Endothelial cell of umbilical vein (primary cell): ENCODE measurements at regions of chr17 and their contacts with region 1.

Region 1: GRCh38 chr17:50547035-50547735 is at the start of gene SPATA20:
- DNase-seq: peak; percentile 84
- H3K4me3 ChIP-seq: peak within 1 kb of the TSS; percentile 27 to 58 (median 46)
- H3K27ac ChIP-seq: peak within 1 kb of the TSS; percentile 47
- H3K4me1 ChIP-seq: peaks cover 12% of the 10 kb centered on the region
- H3K27me3 ChIP-seq: no peaks in the 10 kb centered on the region
- CTCF ChIP-seq: peak; percentile 95 to 99
- POLR2A ChIP-seq: peak; percentile 92
- total RNA-seq, gene SPATA20: 31.4 and 42.3 TPM in 2 replicates

Region 2: GRCh38 chr17:49809056-49809455 is 738.1 kb before region 1 on chr17:
- CTCF ChIA-PET with region 1: no interaction called
- POLR2A ChIA-PET with region 1: no interaction called
- dilution Hi-C with region 1: no loop called
- intact Hi-C with region 1: no loop called
- DNase-seq: no peak
- H3K4me3 ChIP-seq: no peak overlapping the region
- H3K27ac ChIP-seq: no peak overlapping the region
- H3K4me1 ChIP-seq: peaks cover 8% of the 10 kb centered on the region
- H3K27me3 ChIP-seq: no peaks in the 10 kb centered on the region
- CTCF ChIP-seq: no peak
- POLR2A ChIP-seq: no peak

Region 3: DNA sequence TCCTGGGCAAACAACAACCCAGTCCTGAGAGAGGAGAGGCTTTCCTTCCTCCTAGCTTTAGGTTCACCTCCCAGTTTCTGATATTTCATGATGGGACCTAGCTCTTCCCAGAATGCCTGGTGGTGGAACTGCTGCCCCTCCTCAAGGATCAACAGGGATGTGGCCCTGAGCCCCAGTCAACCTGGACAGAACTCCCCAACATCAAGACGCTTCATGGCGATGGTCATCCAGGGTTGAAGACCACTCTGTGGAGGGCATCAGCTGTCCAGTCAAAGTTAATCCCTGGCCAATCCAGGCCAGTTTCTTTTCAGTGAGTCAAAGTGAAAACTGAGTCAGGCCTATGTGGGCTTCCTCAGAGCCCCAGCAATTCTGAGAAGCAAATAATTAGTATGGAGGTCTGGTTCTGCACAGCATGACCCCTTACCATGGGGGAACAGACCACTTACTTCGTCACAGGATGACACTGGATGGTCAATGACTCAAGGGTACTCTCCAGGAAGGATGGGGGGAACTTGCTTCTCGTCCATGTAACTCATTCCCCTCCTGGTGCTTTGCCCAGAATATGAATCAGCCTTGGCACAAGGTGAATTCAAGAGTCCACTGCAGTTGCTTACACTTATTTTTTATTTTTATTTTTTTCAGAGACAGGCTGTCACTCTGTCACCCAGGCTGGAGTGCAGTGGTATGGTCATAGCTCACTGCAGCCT is 215.9 kb before region 1 on chr17:
- CTCF ChIA-PET with region 1: no interaction called
- POLR2A ChIA-PET with region 1: no interaction called
- dilution Hi-C with region 1: no loop called
- intact Hi-C with region 1: no loop called
- DNase-seq: no peak
- H3K4me3 ChIP-seq: no peak overlapping the region
- H3K27ac ChIP-seq: no peak overlapping the region
- H3K4me1 ChIP-seq: no peaks in the 10 kb centered on the region
- H3K27me3 ChIP-seq: peaks cover 9 to 11% of the 10 kb centered on the region in 2 experiments
- CTCF ChIP-seq: no peak
- POLR2A ChIP-seq: no peak

Region 4: GRCh38 chr17:50361561-50362480 is 185.4 kb before region 1 on chr17:
- CTCF ChIA-PET with region 1: no interaction called
- POLR2A ChIA-PET with region 1: no interaction called
- dilution Hi-C with region 1: no loop called
- intact Hi-C with region 1: no loop called
- DNase-seq: peak; percentile 61
- H3K4me3 ChIP-seq: no peak overlapping the region
- H3K27ac ChIP-seq: no peak overlapping the region
- H3K4me1 ChIP-seq: no peaks in the 10 kb centered on the region
- H3K27me3 ChIP-seq: no peaks in the 10 kb centered on the region
- CTCF ChIP-seq: peak; percentile 77 to 84
- POLR2A ChIP-seq: no peak

Region 5: DNA sequence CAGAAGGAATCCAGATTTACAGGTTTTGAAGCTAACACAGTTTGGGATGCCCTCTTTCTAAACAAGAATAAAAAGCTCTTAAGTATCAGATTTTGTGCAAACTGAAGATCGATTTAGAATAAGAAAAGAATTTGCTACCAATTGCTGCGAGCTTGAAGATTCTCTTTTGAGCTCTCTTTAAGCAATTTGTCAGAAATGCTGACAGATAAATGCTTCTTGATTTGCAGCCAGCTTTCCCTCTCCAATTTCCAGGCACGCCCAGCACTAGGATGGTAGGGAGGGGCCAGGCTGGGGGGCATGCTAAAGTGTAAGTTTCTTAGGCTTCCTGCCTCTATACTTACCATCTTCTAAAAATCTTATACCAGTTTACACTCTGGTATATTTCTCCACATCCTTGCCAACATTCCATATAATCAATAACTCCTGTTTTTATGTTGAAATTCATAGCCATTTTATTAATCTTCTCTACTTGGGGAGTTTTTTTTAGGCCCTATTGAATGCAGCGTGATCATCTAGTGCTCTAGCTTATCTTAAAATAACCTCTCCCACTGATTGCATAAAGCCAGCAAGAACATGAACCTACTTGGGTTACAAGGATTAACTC is 103.7 kb before region 1 on chr17:
- CTCF ChIA-PET with region 1: no interaction called
- POLR2A ChIA-PET with region 1: no interaction called
- dilution Hi-C with region 1: no loop called
- intact Hi-C with region 1: no loop called
- DNase-seq: no peak
- H3K4me3 ChIP-seq: no peak overlapping the region
- H3K27ac ChIP-seq: no peak overlapping the region
- H3K4me1 ChIP-seq: no peaks in the 10 kb centered on the region
- H3K27me3 ChIP-seq: no peaks in the 10 kb centered on the region
- CTCF ChIP-seq: no peak
- POLR2A ChIP-seq: no peak

Region 6: GRCh38 chr17:50560185-50560824 is 13.1 kb after region 1 on chr17 and contains the start of gene CACNA1G:
- CTCF ChIA-PET with region 1: interaction called, 17 read pairs
- POLR2A ChIA-PET with region 1: interaction called, 3 read pairs
- dilution Hi-C with region 1: no loop called
- intact Hi-C with region 1: no loop called
- DNase-seq: peak; percentile 70
- H3K4me3 ChIP-seq: peak within 1 kb of the TSS in 1 of 3 experiments; percentile 15
- H3K27ac ChIP-seq: no peak within 1 kb of the TSS
- H3K4me1 ChIP-seq: peaks cover 7% of the 10 kb centered on the region
- H3K27me3 ChIP-seq: peaks cover 46 to 55% of the 10 kb centered on the region in 2 experiments
- CTCF ChIP-seq: no peak
- POLR2A ChIP-seq: no peak
- total RNA-seq, gene CACNA1G: not detected in 2 replicates

Region 7: DNA sequence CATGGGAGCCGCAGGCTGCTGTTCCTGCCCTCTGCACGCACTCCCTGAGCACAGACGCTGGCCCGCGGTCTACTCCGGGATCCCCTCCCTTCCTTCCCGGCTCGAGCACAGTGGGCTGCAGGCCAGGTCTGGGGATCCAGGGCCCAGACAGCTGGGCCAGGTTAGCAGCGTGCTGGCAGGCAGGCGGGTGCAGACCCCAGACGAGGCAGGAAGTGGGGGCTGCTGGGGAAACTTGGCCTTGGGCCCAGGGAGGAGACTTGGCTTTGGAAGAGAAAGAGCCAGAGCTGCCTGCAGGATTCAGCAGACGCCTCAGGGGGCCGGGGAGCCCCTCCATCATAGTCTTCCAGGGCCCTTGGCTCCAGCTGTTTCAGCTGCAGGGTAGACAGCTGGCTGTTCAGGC is 57.3 kb after region 1 on chr17:
- CTCF ChIA-PET with region 1: interaction called, 12 read pairs
- POLR2A ChIA-PET with region 1: no interaction called
- dilution Hi-C with region 1: no loop called
- intact Hi-C with region 1: no loop called
- DNase-seq: peak; percentile 88
- H3K4me3 ChIP-seq: no peak overlapping the region
- H3K27ac ChIP-seq: no peak overlapping the region
- H3K4me1 ChIP-seq: peaks cover 13% of the 10 kb centered on the region
- H3K27me3 ChIP-seq: peaks cover 2 to 3% of the 10 kb centered on the region in 2 experiments
- CTCF ChIP-seq: no peak
- POLR2A ChIP-seq: no peak

Region 8: DNA sequence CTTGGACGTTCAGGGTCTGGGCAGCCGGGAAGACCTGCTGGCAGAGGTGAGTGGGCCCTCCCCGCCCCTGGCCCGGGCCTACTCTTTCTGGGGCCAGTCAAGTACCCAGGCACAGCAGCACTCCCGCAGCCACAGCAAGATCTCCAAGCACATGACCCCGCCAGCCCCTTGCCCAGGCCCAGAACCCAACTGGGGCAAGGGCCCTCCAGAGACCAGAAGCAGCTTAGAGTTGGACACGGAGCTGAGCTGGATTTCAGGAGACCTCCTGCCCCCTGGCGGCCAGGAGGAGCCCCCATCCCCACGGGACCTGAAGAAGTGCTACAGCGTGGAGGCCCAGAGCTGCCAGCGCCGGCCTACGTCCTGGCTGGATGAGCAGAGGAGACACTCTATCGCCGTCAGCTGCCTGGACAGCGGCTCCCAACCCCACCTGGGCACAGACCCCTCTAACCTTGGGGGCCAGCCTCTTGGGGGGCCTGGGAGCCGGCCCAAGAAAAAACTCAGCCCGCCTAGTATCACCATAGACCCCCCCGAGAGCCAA is 78.9 kb after region 1 on chr17:
- CTCF ChIA-PET with region 1: interaction called, 398 read pairs
- POLR2A ChIA-PET with region 1: interaction called, 6 read pairs
- dilution Hi-C with region 1: no loop called
- intact Hi-C with region 1: loop called (anchors 1 kb)
- DNase-seq: peak; percentile 65
- H3K4me3 ChIP-seq: no peak overlapping the region
- H3K27ac ChIP-seq: no peak overlapping the region
- H3K4me1 ChIP-seq: peaks cover 2% of the 10 kb centered on the region
- H3K27me3 ChIP-seq: peaks cover 0 to 5% of the 10 kb centered on the region in 2 experiments
- CTCF ChIP-seq: peak; percentile 67 to 94
- POLR2A ChIP-seq: no peak

Region 9: DNA sequence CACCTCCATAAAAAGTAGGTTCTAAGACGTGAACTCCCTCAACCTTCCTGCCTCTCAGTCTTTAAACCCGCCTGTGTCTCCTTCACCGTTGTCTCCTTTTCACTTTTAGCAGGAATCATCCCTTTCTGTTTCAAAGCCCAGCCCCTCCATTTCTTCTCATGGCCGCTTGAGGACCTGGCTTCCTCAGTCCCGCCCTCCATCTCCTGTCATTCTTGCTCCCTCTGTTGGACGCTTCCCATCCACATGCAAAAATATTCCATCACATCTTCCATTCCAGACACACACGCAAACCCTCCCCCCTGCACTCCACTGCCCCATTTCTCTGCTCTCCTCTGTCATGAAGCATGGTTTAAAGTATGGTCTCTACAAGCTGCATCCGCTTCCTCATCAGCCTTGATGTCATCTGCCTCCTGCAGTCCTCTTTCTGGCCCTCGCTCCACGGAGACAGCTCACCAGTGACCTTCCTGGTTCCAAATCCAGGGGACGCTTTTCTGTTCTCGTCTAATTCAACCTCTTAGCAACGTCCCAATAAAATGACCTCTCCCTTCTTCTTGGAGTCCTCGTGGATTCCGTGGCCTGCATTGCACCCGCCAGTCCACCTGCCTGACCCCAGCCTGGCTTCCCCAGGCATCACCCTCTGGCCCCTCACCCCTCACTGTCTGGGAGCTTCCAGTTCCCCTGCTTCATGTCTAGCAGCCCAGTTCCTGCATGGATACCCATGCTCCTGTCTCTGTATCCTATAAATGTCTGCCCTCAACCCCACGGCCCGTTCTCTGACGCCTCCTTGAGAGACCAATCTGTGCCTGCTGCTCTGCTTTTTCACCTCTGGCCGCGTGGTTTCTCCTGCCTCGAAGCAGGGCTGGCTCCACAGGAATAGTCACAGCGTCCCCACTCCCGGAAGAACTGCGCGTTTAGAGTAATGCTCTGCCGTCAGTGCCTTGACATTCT is 134.4 kb after region 1 on chr17:
- CTCF ChIA-PET with region 1: interaction called, 21 read pairs
- POLR2A ChIA-PET with region 1: no interaction called
- dilution Hi-C with region 1: no loop called
- intact Hi-C with region 1: loop called (anchors 1 kb)
- DNase-seq: peak; percentile 83
- H3K4me3 ChIP-seq: no peak overlapping the region
- H3K27ac ChIP-seq: no peak overlapping the region
- H3K4me1 ChIP-seq: peaks cover 3% of the 10 kb centered on the region
- H3K27me3 ChIP-seq: no peaks in the 10 kb centered on the region
- CTCF ChIP-seq: peak; percentile 71 to 77
- POLR2A ChIP-seq: no peak

Region 10: DNA sequence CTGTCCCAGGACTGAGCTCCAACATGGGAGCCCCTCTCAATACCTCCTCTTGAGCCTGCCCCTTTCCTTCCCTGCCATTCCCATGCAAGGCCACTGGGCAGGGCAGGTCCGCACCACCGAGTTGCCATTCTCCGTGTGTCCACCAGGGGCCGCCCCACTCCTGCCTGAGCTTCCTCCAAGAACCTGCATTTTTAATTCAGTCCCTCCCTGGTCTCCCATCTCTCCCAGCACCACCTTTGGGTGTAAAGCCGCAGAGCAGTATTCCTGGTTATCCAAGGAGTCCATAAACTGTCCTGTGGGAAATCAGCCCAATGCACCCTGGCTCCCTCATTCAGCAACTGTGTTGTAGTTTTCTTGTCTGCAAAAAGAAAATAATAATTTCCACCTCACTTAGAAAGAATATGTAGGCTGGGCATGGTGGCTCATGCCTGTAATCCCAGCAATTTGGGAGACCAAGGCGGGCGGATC is 236.0 kb after region 1 on chr17:
- CTCF ChIA-PET with region 1: interaction called, 4 read pairs
- POLR2A ChIA-PET with region 1: no interaction called
- dilution Hi-C with region 1: no loop called
- intact Hi-C with region 1: loop called (anchors 1 kb)
- DNase-seq: peak; percentile 87
- H3K4me3 ChIP-seq: no peak overlapping the region
- H3K27ac ChIP-seq: no peak overlapping the region
- H3K4me1 ChIP-seq: peaks cover 5% of the 10 kb centered on the region
- H3K27me3 ChIP-seq: peaks cover 0 to 2% of the 10 kb centered on the region in 2 experiments
- CTCF ChIP-seq: peak; percentile 97 to 99
- POLR2A ChIP-seq: no peak

Region 11: GRCh38 chr17:51153210-51154072 is 606.3 kb after region 1 on chr17 and contains the start of gene NME1:
- CTCF ChIA-PET with region 1: no interaction called
- POLR2A ChIA-PET with region 1: no interaction called
- dilution Hi-C with region 1: no loop called
- intact Hi-C with region 1: loop called (anchors 10 kb)
- DNase-seq: peak; percentile 99
- H3K4me3 ChIP-seq: peak within 1 kb of the TSS; percentile 56 to 87 (median 85)
- H3K27ac ChIP-seq: peak within 1 kb of the TSS; percentile 70
- H3K4me1 ChIP-seq: peaks cover 14% of the 10 kb centered on the region
- H3K27me3 ChIP-seq: no peaks in the 10 kb centered on the region
- CTCF ChIP-seq: peak; percentile 82 to 96
- POLR2A ChIP-seq: peak; percentile 74
- total RNA-seq, gene NME1: 214 and 215 TPM in 2 replicates